Dorsolateral prefrontal cortex (tissue), 120 donors: ENCODE measurements at regions of chr10 and their contacts with region 1.

Region 1: GRCh38 chr10:73785221-73785720 is at the start of gene ZSWIM8:
- DNase-seq: peak; percentile 76 to 97 (median 93)
- H3K4me3 ChIP-seq: peak within 1 kb of the TSS; percentile 66 to 99 (median 90)
- H3K27ac ChIP-seq: peak within 1 kb of the TSS; percentile 65 to 96 (median 91)
- H3K27me3 ChIP-seq: no peaks in the 10 kb centered on the region
- CTCF ChIP-seq: peak in 35 of 56 donors; percentile 8 to 57 (median 33)
- total RNA-seq, gene ZSWIM8: 83.0 to 208 (median 131) TPM

Region 2: GRCh38 chr10:73743905-73744663 is 41.2 kb before region 1 on chr10 and contains the start of gene SEC24C:
- intact Hi-C with region 1: loop called (anchors 5 kb)
- DNase-seq: peak; percentile 94 to 97 (median 96)
- H3K4me3 ChIP-seq: peak within 1 kb of the TSS; percentile 55 to 100 (median 94)
- H3K27ac ChIP-seq: peak within 1 kb of the TSS; percentile 79 to 100 (median 96)
- H3K27me3 ChIP-seq: no peaks in the 10 kb centered on the region
- CTCF ChIP-seq: peak in 26 of 56 donors; percentile 3 to 47 (median 22)
- total RNA-seq, gene SEC24C: 55.3 to 85.9 (median 67.1) TPM

Region 3: DNA sequence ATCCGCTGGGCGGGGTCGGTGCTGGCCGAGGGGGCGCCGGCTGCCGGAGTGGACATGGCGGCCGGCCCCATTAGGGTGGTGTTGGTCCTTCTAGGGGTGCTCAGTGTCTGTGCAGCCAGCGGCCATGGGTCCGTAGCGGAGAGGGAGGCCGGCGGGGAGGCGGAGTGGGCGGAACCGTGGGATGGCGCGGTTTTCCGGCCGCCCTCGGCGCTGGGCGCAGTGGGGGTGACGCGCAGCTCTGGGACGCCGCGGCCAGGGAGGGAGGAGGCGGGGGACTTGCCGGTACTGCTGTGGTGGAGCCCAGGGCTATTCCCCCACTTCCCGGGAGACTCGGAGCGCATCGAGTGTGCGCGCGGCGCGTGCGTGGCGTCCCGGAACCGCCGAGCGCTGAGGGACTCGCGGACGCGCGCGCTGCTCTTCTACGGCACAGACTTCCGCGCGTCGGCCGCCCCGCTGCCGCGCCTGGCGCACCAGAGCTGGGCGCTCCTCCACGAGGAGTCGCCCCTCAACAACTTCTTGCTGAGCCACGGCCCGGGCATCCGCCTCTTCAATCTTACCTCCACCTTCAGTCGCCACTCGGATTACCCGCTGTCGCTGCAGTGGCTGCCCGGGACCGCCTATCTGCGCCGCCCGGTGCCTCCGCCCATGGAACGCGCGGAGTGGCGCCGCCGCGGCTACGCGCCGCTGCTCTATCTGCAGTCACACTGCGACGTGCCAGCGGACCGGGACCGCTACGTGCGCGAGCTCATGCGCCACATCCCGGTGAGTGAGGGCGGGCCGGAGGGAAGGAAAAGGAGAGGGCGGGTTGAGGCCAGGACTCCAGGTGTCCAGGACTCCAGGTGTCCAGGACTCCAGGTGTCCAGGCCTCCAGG is 12.8 kb before region 1 on chr10:
- intact Hi-C with region 1: loop called in 1 of 2 experiments (anchors 1 kb)
- DNase-seq: peak; percentile 55 to 94 (median 75)
- H3K4me3 ChIP-seq: peak overlapping the region; percentile 62 to 97 (median 88)
- H3K27ac ChIP-seq: peak overlapping the region; percentile 72 to 100 (median 98)
- H3K27me3 ChIP-seq: no peaks in the 10 kb centered on the region
- CTCF ChIP-seq: peak in 29 of 56 donors; percentile 1 to 49 (median 15)

Region 4: DNA sequence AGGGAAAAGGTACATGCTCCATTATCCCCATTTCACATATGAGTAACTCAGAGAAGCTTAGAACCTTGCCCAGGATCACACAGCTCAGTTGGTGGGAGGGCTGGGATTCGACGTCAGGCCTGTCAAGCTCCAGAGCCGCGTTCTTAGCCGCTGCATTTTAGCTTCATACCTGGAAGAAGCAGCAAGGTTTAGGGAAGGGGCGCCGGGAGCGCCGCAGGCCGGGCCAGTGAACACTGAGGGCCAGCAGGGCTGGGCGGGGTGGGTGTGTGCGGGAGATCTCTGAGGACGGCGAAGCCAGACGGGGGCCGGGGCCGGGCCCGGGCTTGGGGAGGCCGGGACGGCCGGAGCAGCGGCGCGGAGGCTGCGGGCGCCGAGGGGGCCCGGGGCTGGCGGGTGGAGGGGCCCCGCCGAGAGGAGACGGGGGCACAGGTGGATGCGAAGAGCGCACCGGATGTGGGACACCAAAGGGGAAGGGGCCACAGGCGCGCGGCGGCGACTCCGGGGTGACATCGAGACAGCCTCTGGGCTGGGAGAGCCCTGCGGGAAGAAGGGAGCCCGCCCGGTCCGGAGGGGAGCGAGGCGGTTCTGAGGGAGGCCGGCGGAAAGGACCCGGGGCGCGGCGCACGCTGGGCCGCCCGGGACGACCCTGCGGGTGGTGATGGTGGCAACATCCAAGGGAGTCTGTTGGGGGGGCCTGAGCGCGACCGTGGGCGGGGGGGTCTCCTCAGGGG is 25.6 kb after region 1 on chr10:
- intact Hi-C with region 1: loop called in 1 of 2 experiments (anchors 2 kb)
- DNase-seq: peak in 4 of 10 donors; percentile 19 to 53 (median 22)
- H3K4me3 ChIP-seq: peak overlapping the region; percentile 64 to 98 (median 87)
- H3K27ac ChIP-seq: peak overlapping the region; percentile 65 to 96 (median 91)
- H3K27me3 ChIP-seq: no peaks in the 10 kb centered on the region
- CTCF ChIP-seq: no peak

Region 5: GRCh38 chr10:73908853-73909538 is 123.7 kb after region 1 on chr10:
- intact Hi-C with region 1: no loop called
- DNase-seq: no peak
- H3K4me3 ChIP-seq: no peak overlapping the region
- H3K27ac ChIP-seq: no peak overlapping the region
- H3K27me3 ChIP-seq: peaks cover 0 to 40% (median 8%) of the 10 kb centered on the region in 45 donors
- CTCF ChIP-seq: no peak